CD8-positive, alpha-beta T cell (primary cell): ENCODE measurements at regions of chr4 and their contacts with region 1.

Region 1: DNA sequence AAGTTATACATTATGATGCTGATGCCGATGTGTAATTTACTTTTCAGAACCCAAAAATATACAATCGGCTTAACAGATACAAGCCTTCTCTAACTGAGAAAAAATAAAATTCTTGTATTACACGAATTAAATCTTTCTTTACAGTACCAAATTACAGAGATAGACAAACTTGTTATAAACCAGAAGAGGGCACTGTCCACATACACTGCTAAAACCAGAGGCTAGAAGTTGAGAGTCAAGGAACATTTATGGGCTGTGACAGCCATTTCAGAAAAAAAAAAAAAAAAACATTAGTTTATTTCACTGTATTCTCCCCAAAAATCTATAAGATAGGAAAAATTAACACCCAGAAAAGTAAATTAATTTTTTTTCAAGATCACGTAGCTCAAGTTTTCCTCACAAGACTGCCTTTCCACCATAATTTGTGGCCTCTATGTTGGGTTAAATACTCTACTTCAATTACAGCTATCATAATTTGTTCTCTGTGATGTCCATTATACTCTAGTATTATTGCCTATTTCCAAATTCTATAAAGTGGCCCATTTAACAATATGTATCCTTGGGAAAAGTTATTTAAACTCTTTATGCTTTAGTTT is 12.0 kb downstream of the EREG start:
- DNase-seq: peak in 2 of 9 experiments; percentile 56 to 70
- ATAC-seq: peak; percentile 62
- H3K4me3 ChIP-seq: no peak overlapping the region
- H3K4me3 Mint-ChIP-seq: no peak overlapping the region
- H3K27ac ChIP-seq: no peak overlapping the region
- H3K27ac Mint-ChIP-seq: no peak overlapping the region
- H3K4me1 ChIP-seq: no peaks in the 10 kb centered on the region
- H3K4me1 Mint-ChIP-seq: no peaks in the 10 kb centered on the region
- H3K27me3 ChIP-seq: no peaks in the 10 kb centered on the region
- H3K27me3 Mint-ChIP-seq: peaks cover 12% of the 10 kb centered on the region
- CTCF ChIP-seq: peak; percentile 71

Region 2: DNA sequence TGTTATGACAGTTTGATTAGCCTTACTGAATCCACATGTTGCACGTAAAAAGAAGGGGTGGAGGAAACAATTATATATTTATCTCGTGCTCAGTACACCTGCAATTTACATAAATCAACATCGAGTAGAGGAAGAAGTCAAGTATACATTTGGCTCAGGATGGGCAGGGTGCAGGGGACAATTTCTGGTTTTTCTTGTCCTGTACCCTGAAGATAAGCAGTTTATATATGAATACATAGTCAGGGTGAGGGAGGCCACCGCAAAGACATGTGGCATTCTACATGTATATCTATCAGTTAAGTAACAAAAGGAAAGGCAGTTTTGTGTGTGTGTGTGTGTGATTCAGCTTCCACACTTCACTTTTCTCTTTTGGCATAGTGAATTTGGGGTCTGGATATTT is 23.1 kb before region 1 on chr4:
- CTCF ChIA-PET with region 1: no interaction called
- POLR2A ChIA-PET with region 1: no interaction called
- intact Hi-C with region 1: no loop called
- DNase-seq: no peak
- ATAC-seq: no peak
- H3K4me3 ChIP-seq: no peak overlapping the region
- H3K4me3 Mint-ChIP-seq: no peak overlapping the region
- H3K27ac ChIP-seq: no peak overlapping the region
- H3K27ac Mint-ChIP-seq: no peak overlapping the region
- H3K4me1 ChIP-seq: no peaks in the 10 kb centered on the region
- H3K4me1 Mint-ChIP-seq: no peaks in the 10 kb centered on the region
- H3K27me3 ChIP-seq: no peaks in the 10 kb centered on the region
- H3K27me3 Mint-ChIP-seq: peaks cover 3% of the 10 kb centered on the region
- CTCF ChIP-seq: no peak

Region 3: DNA sequence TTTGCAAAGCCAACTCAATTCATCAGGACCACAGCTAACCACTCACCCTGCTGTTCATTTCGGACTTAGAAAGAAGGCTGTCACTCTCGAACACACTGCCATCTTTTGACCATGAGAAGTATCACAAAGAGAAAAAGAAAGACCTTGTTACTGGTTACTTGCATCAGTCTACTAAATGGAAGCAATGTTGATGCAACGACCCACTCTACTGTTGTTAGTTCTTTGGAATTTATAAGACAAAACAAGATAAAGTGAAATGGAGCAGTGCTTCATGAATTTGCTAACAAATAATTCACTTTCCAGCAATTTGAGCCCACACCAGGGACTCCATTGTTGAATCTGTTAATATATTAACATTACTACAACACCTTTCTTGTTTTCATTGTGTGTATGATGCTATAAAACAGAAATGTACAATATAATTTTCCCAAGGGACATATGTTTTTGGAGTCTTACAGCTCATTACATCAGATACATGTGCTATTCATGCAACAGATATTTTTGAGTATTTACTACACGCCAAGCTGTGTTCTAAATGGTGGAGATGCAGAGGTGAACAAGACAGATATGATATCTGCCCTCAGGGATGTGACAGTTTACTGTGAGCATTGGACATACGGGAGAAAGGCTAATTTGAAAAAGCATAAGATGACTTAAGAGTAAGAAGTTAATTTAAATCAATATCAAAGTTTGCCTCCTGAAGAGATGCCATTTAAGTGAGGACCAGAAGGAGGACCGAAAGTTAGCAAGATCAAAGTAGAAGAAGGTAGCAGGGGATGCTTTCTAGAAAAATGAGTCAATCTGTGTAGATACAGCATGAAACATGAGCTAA is 155.2 kb after region 1 on chr4:
- CTCF ChIA-PET with region 1: interaction called, 37 read pairs
- POLR2A ChIA-PET with region 1: no interaction called
- intact Hi-C with region 1: loop called (anchors 1 to 2 kb)
- DNase-seq: peak in 2 of 9 experiments; percentile 39 to 62
- ATAC-seq: peak; percentile 48
- H3K4me3 ChIP-seq: no peak overlapping the region
- H3K4me3 Mint-ChIP-seq: no peak overlapping the region
- H3K27ac ChIP-seq: no peak overlapping the region
- H3K27ac Mint-ChIP-seq: no peak overlapping the region
- H3K4me1 ChIP-seq: no peaks in the 10 kb centered on the region
- H3K4me1 Mint-ChIP-seq: no peaks in the 10 kb centered on the region
- H3K27me3 ChIP-seq: no peaks in the 10 kb centered on the region
- H3K27me3 Mint-ChIP-seq: peaks cover 5% of the 10 kb centered on the region
- CTCF ChIP-seq: peak; percentile 40

Region 4: DNA sequence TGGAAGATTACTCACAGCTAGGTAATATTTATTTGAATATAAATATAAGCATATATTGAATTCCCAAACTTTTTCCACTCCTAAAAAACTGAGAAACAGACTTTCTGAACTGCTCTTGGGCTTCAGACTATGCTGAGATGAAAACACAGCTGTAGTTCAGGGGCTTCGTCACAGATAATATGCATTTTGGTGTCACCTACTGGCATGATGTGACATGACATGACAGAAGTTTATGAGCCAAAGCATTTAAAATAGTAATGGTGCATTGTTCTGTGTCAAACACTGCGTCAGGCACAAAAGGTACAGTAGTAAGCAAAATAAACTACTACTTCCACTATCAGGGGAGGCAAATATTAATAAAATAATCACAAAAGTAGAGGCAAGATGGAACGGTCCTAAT is 246.1 kb after region 1 on chr4:
- CTCF ChIA-PET with region 1: interaction called, 7 read pairs
- POLR2A ChIA-PET with region 1: no interaction called
- intact Hi-C with region 1: loop called (anchors 1 to 2 kb)
- DNase-seq: peak in 3 of 9 experiments; percentile 5 to 48 (median 34)
- ATAC-seq: peak; percentile 46
- H3K4me3 ChIP-seq: no peak overlapping the region
- H3K4me3 Mint-ChIP-seq: no peak overlapping the region
- H3K27ac ChIP-seq: no peak overlapping the region
- H3K27ac Mint-ChIP-seq: no peak overlapping the region
- H3K4me1 ChIP-seq: no peaks in the 10 kb centered on the region
- H3K4me1 Mint-ChIP-seq: peaks cover 13% of the 10 kb centered on the region
- H3K27me3 ChIP-seq: no peaks in the 10 kb centered on the region
- H3K27me3 Mint-ChIP-seq: peaks cover 2% of the 10 kb centered on the region
- CTCF ChIP-seq: peak; percentile 52